Mammary epithelial cell (primary cell): ENCODE measurements at regions of chr9 and their contacts with region 1.

Region 1: DNA sequence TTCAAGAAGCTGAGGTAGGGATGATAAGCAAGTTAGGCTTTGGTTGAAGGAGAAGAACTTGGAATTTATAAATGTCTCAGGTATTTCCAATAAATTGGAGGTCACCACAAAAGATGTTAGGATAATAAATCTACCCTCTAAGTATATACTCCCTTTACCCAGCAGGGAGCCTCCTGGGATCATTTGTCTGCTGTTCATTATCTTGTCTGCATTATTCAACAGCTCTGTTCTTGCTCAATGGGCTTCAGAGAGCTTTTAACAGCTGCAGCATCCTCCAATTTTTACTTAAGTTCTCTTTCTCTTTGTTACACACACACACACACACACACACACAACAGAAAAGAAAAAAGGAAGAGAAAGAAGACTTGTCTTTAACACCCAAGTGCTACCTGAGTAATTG is 51.7 kb upstream of the VPS13A start:
- DNase-seq: no peak
- H3K4me3 ChIP-seq: no peak overlapping the region
- H3K27ac ChIP-seq: no peak overlapping the region
- H3K4me1 ChIP-seq: no peaks in the 10 kb centered on the region
- H3K27me3 ChIP-seq: peaks cover 6% of the 10 kb centered on the region
- CTCF ChIP-seq: no peak

Region 2: GRCh38 chr9:76987594-76988200 is 138.0 kb before region 1 on chr9:
- CTCF ChIA-PET with region 1: no interaction called
- dilution Hi-C with region 1: no loop called
- in situ Hi-C with region 1: no loop called
- intact Hi-C with region 1: no loop called
- DNase-seq: peak; percentile 35
- H3K4me3 ChIP-seq: no peak overlapping the region
- H3K27ac ChIP-seq: no peak overlapping the region
- H3K4me1 ChIP-seq: no peaks in the 10 kb centered on the region
- H3K27me3 ChIP-seq: no peaks in the 10 kb centered on the region
- CTCF ChIP-seq: peak; percentile 58 to 75

Region 3: GRCh38 chr9:77084094-77084493 is 41.6 kb before region 1 on chr9:
- CTCF ChIA-PET with region 1: no interaction called
- dilution Hi-C with region 1: loop called (anchors 5 kb)
- in situ Hi-C with region 1: no loop called
- intact Hi-C with region 1: no loop called
- DNase-seq: no peak
- H3K4me3 ChIP-seq: no peak overlapping the region
- H3K27ac ChIP-seq: no peak overlapping the region
- H3K4me1 ChIP-seq: no peaks in the 10 kb centered on the region
- H3K27me3 ChIP-seq: peaks cover 1% of the 10 kb centered on the region
- CTCF ChIP-seq: no peak

Region 4: GRCh38 chr9:77170991-77171699 is 45.5 kb after region 1 on chr9:
- CTCF ChIA-PET with region 1: no interaction called
- dilution Hi-C with region 1: no loop called
- in situ Hi-C with region 1: no loop called
- intact Hi-C with region 1: no loop called
- DNase-seq: no peak
- H3K4me3 ChIP-seq: no peak overlapping the region
- H3K27ac ChIP-seq: no peak overlapping the region
- H3K4me1 ChIP-seq: no peaks in the 10 kb centered on the region
- H3K27me3 ChIP-seq: no peaks in the 10 kb centered on the region
- CTCF ChIP-seq: no peak

Region 5: GRCh38 chr9:77534376-77535057 is 408.9 kb after region 1 on chr9:
- CTCF ChIA-PET with region 1: no interaction called
- dilution Hi-C with region 1: no loop called
- in situ Hi-C with region 1: no loop called
- intact Hi-C with region 1: no loop called
- DNase-seq: no peak
- H3K4me3 ChIP-seq: no peak overlapping the region
- H3K27ac ChIP-seq: no peak overlapping the region
- H3K4me1 ChIP-seq: no peaks in the 10 kb centered on the region
- H3K27me3 ChIP-seq: no peaks in the 10 kb centered on the region
- CTCF ChIP-seq: no peak